ENCODE measurements at regions of chr17 and their contacts with region 1.

Region 1: DNA sequence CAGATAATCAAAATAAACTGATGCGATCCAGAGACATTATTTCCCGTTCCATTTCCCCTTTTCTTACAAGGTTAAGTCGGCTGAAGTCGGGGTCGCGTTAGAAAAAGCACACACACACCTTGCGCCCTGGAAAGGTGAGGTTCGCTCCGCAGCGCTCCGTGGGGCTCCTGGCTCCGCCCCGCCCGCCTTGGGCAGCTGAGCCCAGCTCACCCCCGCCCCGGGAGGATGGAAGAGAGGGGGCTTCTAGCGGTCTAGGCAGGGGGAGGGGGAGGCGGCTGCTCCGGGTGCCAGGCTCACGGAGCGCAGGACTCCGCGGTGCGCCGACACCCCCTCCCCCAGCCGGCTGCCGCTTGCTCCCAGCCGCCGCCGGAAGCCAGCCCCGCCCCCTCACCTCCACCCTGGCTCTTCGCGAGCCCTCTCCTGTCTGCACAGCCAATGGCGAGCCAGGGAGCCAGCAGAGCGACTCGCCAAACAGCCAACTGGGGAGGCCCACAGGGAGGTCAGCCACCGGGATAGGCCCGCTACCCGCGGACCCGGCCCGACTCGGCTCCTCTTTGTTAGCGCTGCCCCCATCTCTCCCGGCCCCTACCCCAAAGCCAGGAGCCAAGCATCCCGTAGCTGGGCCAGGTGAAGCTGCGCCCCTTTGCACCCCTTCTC is 30.4 kb downstream of the FAM222B start:
- DNase-seq: peak; percentile 97
- H3K4me3 ChIP-seq: peak overlapping the region; percentile 90 to 98 (median 95)
- H3K27ac ChIP-seq: peak overlapping the region; percentile 95
- H3K4me1 ChIP-seq: peaks cover 44% of the 10 kb centered on the region
- H3K27me3 ChIP-seq: no peaks in the 10 kb centered on the region
- CTCF ChIP-seq: no peak
- POLR2A ChIP-seq: peak; percentile 74

Region 2: DNA sequence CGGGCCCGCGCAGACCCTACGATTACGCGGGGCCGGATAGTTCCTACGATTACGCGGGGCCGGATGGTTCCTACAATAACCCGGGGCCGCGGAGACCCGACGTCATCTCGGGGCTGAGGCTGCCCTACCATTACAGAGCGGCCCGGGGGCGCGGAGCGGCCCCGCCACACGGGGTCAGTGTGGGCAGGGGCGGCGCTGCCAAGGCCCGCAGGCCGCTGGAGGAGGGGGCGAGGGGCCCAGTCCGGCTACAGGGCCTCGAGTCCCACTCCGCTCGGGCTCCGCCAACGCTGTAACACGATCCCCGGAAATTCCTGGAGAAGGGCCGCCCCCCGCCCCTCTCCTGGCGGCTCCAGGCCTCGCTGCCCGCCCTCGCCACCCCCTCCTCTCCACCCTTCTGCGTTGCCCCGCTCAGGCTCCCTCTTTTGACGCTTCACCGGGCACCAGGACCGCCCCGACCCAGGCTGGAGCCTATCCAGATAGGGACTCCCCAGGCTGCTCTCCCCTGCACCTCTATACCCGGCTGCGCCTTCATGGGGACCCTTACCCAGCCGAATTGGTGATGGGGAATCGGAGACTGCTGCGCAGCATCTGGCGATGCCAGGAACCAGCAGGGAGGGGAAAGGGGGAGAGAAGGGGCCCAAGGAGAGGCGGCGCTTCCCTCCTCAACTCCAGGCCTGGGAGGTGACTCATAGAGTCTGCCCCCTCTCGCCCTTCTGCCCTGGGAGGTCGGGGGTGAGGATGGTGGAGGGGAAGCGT is 94.5 kb before region 1 on chr17 and contains the start of gene RAB34:
- CTCF ChIA-PET with region 1: no interaction called
- POLR2A ChIA-PET with region 1: interaction called, 15 read pairs
- dilution Hi-C with region 1: no loop called
- intact Hi-C with region 1: loop called (anchors 5 kb)
- DNase-seq: peak; percentile 60
- H3K4me3 ChIP-seq: peak within 1 kb of the TSS; percentile 19 to 60 (median 44)
- H3K27ac ChIP-seq: peak within 1 kb of the TSS; percentile 76
- H3K4me1 ChIP-seq: peaks cover 34% of the 10 kb centered on the region
- H3K27me3 ChIP-seq: no peaks in the 10 kb centered on the region
- CTCF ChIP-seq: peak; percentile 33 to 47
- POLR2A ChIP-seq: peak; percentile 46
- total RNA-seq, gene RAB34: 62.3 and 87.1 TPM in 2 replicates

Region 3: GRCh38 chr17:28744104-28744971 is 67.9 kb before region 1 on chr17:
- CTCF ChIA-PET with region 1: no interaction called
- POLR2A ChIA-PET with region 1: interaction called, 10 read pairs
- dilution Hi-C with region 1: no loop called
- intact Hi-C with region 1: no loop called
- DNase-seq: peak; percentile 51
- H3K4me3 ChIP-seq: peak overlapping the region; percentile 77 to 94 (median 86)
- H3K27ac ChIP-seq: peak overlapping the region; percentile 86
- H3K4me1 ChIP-seq: peaks cover 28% of the 10 kb centered on the region
- H3K27me3 ChIP-seq: no peaks in the 10 kb centered on the region
- CTCF ChIP-seq: no peak
- POLR2A ChIP-seq: no peak

Region 4: DNA sequence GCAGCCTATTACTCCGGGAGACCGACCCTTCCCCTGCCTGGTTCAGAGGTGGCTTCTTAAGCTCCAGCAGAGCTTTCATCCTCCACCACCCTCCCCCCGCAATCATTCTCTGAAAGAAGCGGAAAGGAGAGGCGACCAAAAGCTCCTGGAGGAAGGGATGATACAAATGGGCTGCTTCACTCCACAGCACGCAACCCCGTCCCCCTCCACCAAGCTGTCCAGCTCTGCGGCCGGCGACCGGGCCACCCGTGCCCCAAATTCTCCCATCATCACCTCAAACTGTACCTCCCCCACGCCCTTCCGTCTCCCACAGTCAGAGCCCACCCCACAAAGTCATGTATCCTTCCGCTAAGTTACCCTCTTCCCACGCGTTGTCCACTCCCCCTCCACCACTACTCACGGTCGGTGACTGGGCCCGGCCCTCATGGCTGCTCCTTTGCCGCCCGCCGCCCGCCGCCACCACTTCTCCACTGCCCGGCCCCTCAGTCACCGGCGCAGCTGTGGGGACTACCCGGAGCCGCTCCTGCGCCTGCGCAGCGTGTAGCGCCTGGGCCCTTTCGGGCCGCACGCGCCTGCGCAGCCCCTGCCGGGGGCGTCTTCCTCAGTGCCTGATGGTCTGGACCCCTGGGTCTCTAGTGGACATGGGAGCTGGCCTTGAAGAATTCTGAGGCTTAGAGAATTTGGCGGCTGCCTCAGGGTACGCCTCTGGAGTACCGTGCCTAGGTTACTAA is 30.2 kb after region 1 on chr17 and contains the start of gene FAM222B:
- CTCF ChIA-PET with region 1: interaction called, 7 read pairs
- POLR2A ChIA-PET with region 1: interaction called, 6 read pairs
- dilution Hi-C with region 1: no loop called
- intact Hi-C with region 1: loop called (anchors 1 kb)
- DNase-seq: peak; percentile 87
- H3K4me3 ChIP-seq: peak within 1 kb of the TSS; percentile 38 to 70 (median 65)
- H3K27ac ChIP-seq: peak within 1 kb of the TSS; percentile 54
- H3K4me1 ChIP-seq: peaks cover 19% of the 10 kb centered on the region
- H3K27me3 ChIP-seq: no peaks in the 10 kb centered on the region
- CTCF ChIP-seq: no peak
- POLR2A ChIP-seq: peak; percentile 72
- total RNA-seq, gene FAM222B: 30.6 and 33.7 TPM in 2 replicates

Region 5: GRCh38 chr17:28854457-28855350 is 42.5 kb after region 1 on chr17 and contains the start of gene ERAL1:
- CTCF ChIA-PET with region 1: interaction called, 3 read pairs
- POLR2A ChIA-PET with region 1: no interaction called
- dilution Hi-C with region 1: no loop called
- intact Hi-C with region 1: loop called (anchors 2 kb)
- DNase-seq: peak; percentile 92
- H3K4me3 ChIP-seq: peak within 1 kb of the TSS; percentile 21 to 65 (median 43)
- H3K27ac ChIP-seq: peak within 1 kb of the TSS; percentile 10
- H3K4me1 ChIP-seq: peaks cover 12% of the 10 kb centered on the region
- H3K27me3 ChIP-seq: no peaks in the 10 kb centered on the region
- CTCF ChIP-seq: no peak
- POLR2A ChIP-seq: peak; percentile 94
- total RNA-seq, gene ERAL1: 50.3 and 58.0 TPM in 2 replicates

Region 6: DNA sequence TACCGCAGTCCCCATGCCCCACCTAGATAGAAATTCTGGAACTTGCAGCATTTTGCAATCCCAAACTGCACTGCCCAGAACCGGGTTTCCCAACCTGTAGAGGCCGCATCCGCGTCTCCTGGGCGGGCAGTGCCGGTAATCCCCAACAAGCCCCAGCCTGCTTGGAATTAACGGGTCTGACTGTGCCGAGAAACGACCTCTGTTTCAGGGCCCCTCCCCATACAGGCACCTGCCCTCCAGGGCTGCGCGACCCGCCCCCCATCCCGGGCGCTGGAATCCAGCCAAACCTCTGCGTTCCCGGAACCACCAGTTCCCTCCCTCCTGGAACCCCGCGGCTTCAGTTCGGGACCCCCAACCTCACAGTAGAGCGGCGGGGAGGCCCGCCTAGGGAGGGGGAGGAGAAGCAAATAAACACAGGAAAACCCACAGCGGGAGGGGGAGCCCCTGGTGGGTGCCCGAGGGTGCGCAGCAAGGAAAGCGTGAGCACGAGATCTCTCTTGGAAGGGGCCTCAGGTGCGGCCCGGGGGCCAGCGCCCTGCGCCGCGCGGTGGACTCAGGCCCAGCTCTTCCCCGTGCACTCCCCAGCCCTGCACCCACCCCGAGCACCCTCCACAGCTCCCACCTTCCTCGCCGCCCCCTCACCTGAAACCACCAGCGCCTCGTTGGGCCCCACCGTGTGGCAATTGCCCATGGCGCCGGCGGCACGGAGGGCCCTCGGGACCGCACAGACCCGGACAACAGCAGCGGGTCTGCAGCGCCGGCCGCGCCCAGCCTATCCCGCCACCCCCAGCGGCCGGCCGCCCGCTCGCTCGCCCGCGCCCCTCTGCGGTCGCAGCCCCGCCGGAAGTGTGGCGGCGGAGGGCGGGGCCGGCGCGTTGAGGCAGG is 84.9 kb after region 1 on chr17 and contains the start of gene FLOT2:
- CTCF ChIA-PET with region 1: interaction called, 3 read pairs
- POLR2A ChIA-PET with region 1: no interaction called
- dilution Hi-C with region 1: no loop called
- intact Hi-C with region 1: loop called (anchors 2 kb)
- DNase-seq: peak; percentile 22
- H3K4me3 ChIP-seq: peak within 1 kb of the TSS; percentile 63 to 85 (median 66)
- H3K27ac ChIP-seq: peak within 1 kb of the TSS; percentile 19
- H3K4me1 ChIP-seq: peaks cover 41% of the 10 kb centered on the region
- H3K27me3 ChIP-seq: no peaks in the 10 kb centered on the region
- CTCF ChIP-seq: peak; percentile 4 to 31
- POLR2A ChIP-seq: peak; percentile 80
- total RNA-seq, gene FLOT2: 131 and 169 TPM in 2 replicates

Region 7: GRCh38 chr17:29059281-29059680 is 247.1 kb after region 1 on chr17:
- CTCF ChIA-PET with region 1: no interaction called
- POLR2A ChIA-PET with region 1: no interaction called
- dilution Hi-C with region 1: no loop called
- intact Hi-C with region 1: no loop called
- DNase-seq: no peak
- H3K4me3 ChIP-seq: no peak overlapping the region
- H3K27ac ChIP-seq: no peak overlapping the region
- H3K4me1 ChIP-seq: no peaks in the 10 kb centered on the region
- H3K27me3 ChIP-seq: peaks cover 3 to 4% of the 10 kb centered on the region in 2 experiments
- CTCF ChIP-seq: no peak
- POLR2A ChIP-seq: no peak

Measured in endothelial cell of umbilical vein (primary cell).